Activated CD8-positive, alpha-beta T cell treated with anti-CD3 and anti-CD28 coated beads for 36 hours (primary cell): ENCODE measurements at regions of chrX and their contacts with region 1.

Region 1: DNA sequence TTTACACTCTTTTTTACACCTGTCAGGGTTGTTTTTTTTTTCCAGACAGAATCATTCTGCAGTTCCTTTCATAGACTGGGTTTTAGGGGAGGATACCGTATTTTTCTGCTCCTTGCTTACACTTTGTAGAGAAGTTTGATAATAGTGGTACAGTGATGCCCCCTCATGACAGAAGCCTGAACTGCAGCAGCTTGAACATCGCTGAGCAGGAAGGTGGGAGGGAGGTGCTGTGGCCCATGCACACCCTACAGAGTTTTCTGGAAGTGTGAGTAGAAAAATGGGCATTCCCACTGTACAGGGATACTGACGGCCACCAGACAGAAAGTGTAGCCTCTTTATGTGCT is 54.5 kb downstream of the RAB40A start:
- DNase-seq: peak; percentile 87
- ATAC-seq: peak; percentile 96
- H3K4me3 Mint-ChIP-seq: peak overlapping the region; percentile 80
- H3K27ac Mint-ChIP-seq: peak overlapping the region; percentile 49
- H3K4me1 Mint-ChIP-seq: peaks cover 11% of the 10 kb centered on the region
- H3K27me3 Mint-ChIP-seq: no peaks in the 10 kb centered on the region
- CTCF ChIP-seq: peak; percentile 59

Region 2: DNA sequence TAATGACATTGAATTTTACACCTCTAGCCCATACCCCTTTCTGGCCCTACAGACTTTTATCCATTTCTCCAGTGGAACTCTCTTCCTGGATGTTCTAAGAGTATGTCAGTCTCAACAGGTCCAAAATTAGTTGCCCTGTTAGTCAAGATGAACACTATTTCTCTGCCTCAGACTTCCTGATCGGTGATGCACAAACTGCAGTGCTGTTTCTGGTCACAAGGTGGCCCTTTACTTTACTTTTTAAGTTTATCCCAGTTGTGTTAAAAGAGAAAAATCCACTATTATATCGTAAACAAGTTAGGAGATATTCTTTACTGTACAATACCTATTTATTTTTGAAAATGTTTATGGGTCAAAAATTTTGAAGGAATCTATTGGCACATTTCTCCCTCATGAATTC is 121.6 kb before region 1 on chrX:
- CTCF ChIA-PET with region 1: interaction called, 12 read pairs
- POLR2A ChIA-PET with region 1: no interaction called
- intact Hi-C with region 1: loop called (anchors 5 kb)
- DNase-seq: peak; percentile 71
- ATAC-seq: peak; percentile 66
- H3K4me3 Mint-ChIP-seq: no peak overlapping the region
- H3K27ac Mint-ChIP-seq: no peak overlapping the region
- H3K4me1 Mint-ChIP-seq: peaks cover 2% of the 10 kb centered on the region
- H3K27me3 Mint-ChIP-seq: peaks cover 2% of the 10 kb centered on the region
- CTCF ChIP-seq: peak; percentile 59